Gastrocnemius medialis (tissue), 4 donors: ENCODE measurements at regions of chr11 and their contacts with region 1.

Region 1: GRCh38 chr11:67583247-67584204 is at the start of gene GSTP1:
- DNase-seq: peak; percentile 83 to 90
- ATAC-seq: peak; percentile 90 to 92
- H3K4me3 ChIP-seq: peak within 1 kb of the TSS; percentile 77 to 95 (median 88)
- H3K27ac ChIP-seq: peak within 1 kb of the TSS; percentile 93 to 100 (median 96)
- H3K4me1 ChIP-seq: peaks cover 12 to 16% of the 10 kb centered on the region in 2 donors
- H3K27me3 ChIP-seq: no peaks in the 10 kb centered on the region
- CTCF ChIP-seq: peak; percentile 76 to 94 (median 92)
- POLR2A ChIP-seq: peak; percentile 92
- total RNA-seq, gene GSTP1: 316 to 866 (median 549) TPM

Region 2: DNA sequence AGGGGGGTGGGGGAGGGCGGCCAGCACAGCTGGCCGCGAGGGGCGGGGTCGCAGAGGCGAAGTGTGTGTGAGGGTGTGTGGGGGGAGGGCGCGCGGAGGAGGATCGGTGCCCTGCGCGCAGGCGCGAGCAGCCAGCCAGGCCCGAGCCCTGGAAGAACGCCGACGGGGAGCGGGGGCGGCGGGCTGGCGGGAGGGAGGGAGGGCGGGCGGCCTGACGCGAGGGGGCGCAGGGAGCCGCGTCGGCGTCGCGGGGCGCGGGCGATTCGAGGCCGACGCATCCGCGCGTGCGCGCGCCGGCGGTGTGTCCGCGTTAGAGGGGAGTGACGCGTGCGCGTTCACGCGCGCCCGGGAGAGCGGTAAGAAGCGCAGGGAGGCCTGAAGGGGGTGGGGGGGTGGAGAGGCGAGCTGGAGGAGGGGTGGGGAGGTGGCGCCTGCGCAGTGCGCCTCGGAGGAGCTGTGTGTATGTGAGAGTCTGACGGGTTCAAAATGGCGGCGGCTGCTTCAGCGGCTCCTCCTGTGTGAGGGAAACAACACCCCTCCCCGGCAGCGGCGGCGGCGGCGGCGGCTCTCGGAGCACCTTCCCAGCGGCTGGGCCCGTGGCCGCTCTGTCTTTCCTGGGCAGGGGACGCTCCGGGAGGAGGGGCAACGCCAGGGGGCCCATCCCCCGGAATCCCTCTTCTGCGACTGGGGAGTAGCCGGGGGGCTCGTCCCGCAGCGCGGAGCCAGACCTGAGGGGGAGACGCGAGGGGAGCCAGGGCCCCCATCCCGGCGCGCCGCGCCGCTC is 464.5 kb before region 1 on chr11 and contains the start of gene KDM2A:
- in situ Hi-C with region 1: no loop called
- intact Hi-C with region 1: loop called (anchors 10 kb)
- DNase-seq: peak; percentile 99
- ATAC-seq: peak; percentile 82 to 85
- H3K4me3 ChIP-seq: peak within 1 kb of the TSS; percentile 82 to 98 (median 94)
- H3K27ac ChIP-seq: peak within 1 kb of the TSS; percentile 98 to 100 (median 99)
- H3K4me1 ChIP-seq: peaks cover 26 to 35% of the 10 kb centered on the region in 2 donors
- H3K27me3 ChIP-seq: no peaks in the 10 kb centered on the region
- CTCF ChIP-seq: peak in 1 of 5 experiments; percentile 27
- POLR2A ChIP-seq: peak; percentile 73 to 84
- total RNA-seq, gene KDM2A: 34.8 to 55.0 (median 44.9) TPM

Region 3: DNA sequence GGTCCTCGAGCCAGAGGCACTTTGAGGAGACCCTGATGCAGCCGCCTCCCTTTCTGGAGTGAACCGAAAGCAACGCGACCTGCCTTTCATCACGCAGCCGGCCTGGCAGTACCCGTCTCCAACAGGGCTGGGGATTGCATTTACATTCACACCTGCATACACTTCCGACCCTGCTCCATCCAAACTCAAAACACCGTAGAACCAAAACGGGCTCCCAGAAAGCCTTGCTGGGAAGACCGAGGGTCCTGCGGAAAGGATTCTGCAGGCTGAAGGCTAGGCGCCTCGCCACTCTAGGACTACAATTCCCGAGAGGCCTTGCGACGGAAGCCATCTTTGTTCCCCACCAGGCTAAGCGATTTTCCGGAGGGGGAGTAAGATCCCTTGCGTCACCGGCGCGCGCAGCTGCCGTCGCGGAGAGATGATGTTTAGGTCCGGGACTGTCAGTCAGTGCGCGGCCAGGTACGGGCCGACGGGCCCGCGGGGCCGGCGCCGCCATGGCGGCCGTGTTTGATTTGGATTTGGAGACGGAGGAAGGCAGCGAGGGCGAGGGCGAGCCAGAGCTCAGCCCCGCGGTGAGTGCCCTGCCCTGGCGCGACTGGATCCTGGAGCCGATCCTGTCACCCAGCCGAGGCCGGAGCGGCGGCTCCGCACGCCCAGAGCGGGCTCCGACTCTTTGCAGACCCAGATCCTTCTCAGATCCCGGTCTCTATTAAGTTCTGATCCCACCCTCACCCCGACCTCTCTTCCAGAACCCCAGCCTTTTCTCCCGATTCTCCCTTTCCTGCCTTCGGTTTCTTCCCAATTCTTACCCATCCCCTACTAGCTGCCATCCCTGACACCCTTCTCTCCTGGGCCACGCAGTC is 155.2 kb before region 1 on chr11 and contains the start of gene RPS6KB2:
- in situ Hi-C with region 1: no loop called
- intact Hi-C with region 1: loop called (anchors 10 kb)
- DNase-seq: peak; percentile 96 to 99
- ATAC-seq: peak; percentile 96 to 99
- H3K4me3 ChIP-seq: peak within 1 kb of the TSS; percentile 92 to 100 (median 95)
- H3K27ac ChIP-seq: peak within 1 kb of the TSS; percentile 94 to 98 (median 96)
- H3K4me1 ChIP-seq: peaks cover 16 to 32% of the 10 kb centered on the region in 2 donors
- H3K27me3 ChIP-seq: no peaks in the 10 kb centered on the region
- CTCF ChIP-seq: no peak
- POLR2A ChIP-seq: peak; percentile 95 to 98
- total RNA-seq, gene RPS6KB2: 38.0 to 74.1 (median 39.4) TPM

Region 4: GRCh38 chr11:67572747-67573419 is 10.6 kb before region 1 on chr11:
- in situ Hi-C with region 1: no loop called
- intact Hi-C with region 1: loop called (anchors 1 kb)
- DNase-seq: peak; percentile 37 to 78
- ATAC-seq: peak; percentile 52 to 80
- H3K4me3 ChIP-seq: no peak overlapping the region
- H3K27ac ChIP-seq: peak overlapping the region in 2 of 4 donors; percentile 39 to 41
- H3K4me1 ChIP-seq: no peaks in the 10 kb centered on the region
- H3K27me3 ChIP-seq: no peaks in the 10 kb centered on the region
- CTCF ChIP-seq: peak; percentile 71 to 88 (median 76)
- POLR2A ChIP-seq: no peak

Region 5: DNA sequence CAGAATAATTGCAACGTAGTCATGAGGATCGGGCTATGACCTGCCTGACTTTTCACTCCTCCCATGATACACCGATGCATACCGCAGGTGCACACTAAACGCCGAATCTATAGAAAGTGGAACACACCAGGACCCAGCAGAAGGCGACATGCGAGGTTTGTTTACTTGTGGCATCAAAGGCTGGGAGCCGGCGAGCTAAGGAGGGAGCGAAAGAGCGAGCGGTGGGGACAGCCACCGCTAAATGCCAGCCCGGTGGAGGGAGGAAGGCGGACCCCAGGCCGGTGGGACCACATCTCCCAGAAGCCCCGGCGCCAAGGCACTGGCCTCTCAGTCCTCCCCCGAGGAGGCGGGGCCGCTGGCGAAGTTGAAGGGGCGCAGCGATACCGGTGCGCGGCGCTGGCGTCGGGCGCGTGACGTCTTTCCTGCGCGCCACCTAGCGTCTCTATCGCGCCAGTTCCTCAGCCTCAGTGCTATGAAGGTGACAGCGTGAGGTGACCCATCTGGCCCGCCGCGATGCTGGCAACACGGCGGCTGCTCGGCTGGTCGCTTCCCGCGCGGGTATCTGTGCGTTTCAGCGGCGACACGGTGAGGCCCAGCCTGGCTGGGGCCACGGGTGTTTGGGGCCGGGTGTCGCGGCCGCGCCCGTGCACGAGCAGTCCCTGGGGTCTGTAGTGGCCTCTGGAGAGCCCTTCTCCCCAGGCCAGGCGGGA is 23.1 kb after region 1 on chr11 and contains the start of gene NDUFV1:
- in situ Hi-C with region 1: no loop called
- intact Hi-C with region 1: loop called (anchors 1 kb)
- DNase-seq: peak; percentile 93 to 96
- ATAC-seq: peak; percentile 95 to 96
- H3K4me3 ChIP-seq: peak within 1 kb of the TSS; percentile 81 to 100 (median 92)
- H3K27ac ChIP-seq: peak within 1 kb of the TSS; percentile 89 to 97 (median 91)
- H3K4me1 ChIP-seq: peaks cover 16 to 23% of the 10 kb centered on the region in 2 donors
- H3K27me3 ChIP-seq: no peaks in the 10 kb centered on the region
- CTCF ChIP-seq: peak; percentile 41 to 88 (median 79)
- POLR2A ChIP-seq: peak; percentile 64 to 73
- total RNA-seq, gene NDUFV1: 306 to 608 (median 365) TPM

Region 6: DNA sequence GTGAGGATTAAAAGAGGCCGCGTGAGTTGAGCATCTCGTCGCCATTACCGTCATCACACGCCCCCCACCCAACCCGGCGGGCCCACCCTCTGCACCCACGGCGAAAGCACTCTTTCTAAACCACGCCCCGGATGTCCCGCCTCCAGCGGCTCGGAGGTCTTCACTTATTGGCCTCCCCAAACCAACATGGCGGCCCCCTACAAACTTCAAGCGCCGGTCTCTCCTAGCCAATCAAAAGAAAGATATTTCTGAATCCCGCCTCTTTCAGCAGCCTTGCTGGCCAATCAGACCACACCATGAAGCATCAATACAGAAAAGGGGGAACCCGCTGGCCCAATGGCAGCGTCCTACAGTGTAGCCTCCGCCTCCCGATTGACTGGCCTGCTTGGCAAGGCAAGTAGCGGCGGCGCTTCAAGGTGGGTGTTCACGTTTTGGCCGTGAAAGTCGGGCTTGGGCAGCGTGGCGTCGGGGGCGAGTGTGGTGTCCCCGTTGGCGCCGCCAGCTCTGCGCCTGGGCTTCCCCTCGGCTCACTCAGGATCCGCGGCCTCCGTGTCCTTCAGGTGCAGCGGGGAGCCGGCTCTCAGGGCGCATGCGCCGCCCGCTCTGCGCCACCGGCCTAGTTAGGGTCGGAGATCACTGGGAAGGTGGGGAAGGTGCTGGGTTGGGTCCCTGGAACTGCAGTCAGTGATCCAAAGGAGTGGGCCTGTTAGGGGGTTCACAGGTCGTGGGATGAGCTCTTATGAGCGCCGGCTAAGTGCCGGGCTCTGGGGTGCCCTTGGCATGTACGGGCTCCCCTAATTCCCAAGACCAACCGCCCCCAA is 447.0 kb after region 1 on chr11 and contains the start of gene NDUFS8:
- in situ Hi-C with region 1: no loop called
- intact Hi-C with region 1: loop called (anchors 10 kb)
- DNase-seq: peak; percentile 96 to 98
- ATAC-seq: peak; percentile 96 to 99
- H3K4me3 ChIP-seq: peak within 1 kb of the TSS; percentile 71 to 93 (median 86)
- H3K27ac ChIP-seq: peak within 1 kb of the TSS; percentile 90 to 97 (median 92)
- H3K4me1 ChIP-seq: peaks cover 27 to 38% of the 10 kb centered on the region in 2 donors
- H3K27me3 ChIP-seq: no peaks in the 10 kb centered on the region
- CTCF ChIP-seq: no peak
- POLR2A ChIP-seq: peak; percentile 49 to 68
- total RNA-seq, gene NDUFS8: 242 to 432 (median 307) TPM

Region 7: DNA sequence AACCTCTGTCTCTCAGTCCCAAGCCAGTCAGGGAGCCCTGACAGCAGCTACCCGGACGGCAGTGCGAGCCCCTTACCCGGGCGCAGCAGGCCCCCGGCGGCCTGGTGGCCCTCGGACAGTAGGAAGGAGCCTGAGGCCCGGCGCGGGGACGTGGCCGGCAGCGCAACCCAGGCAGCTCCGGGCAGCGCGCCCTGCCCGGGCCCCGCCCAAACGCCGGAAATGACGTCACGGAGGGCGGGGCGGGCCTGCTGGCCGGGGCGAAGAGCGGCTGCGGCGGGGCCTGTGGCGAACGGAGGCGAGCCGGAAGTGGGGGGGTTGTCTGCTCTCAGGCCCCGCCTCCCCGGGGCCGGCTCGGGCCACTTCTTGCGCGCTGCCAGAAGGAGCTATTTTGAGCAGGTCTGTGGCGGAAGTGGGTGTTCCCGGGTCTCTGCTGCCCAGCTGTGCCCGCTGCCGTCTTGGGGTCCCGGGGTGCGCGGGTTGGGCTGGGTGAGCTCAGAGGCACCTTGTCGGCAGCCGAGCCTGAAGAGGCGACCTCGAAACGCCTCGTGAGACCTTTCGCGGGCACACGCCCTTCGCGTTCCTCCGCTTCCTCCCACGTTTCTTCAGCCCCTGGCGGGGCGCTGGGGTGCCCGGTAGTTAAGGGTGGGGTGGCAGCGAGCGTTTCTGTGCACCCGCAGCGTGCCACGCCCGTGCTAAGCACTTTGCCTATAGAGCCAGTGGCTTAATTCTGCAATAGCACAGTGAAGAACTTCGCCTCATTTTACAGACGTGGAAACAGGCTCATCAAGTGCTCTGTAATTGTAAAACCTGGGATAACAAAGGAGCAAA is 688.5 kb after region 1 on chr11 and contains the start of gene C11orf24:
- in situ Hi-C with region 1: no loop called
- intact Hi-C with region 1: no loop called
- DNase-seq: peak; percentile 92 to 94
- ATAC-seq: peak; percentile 92 to 94
- H3K4me3 ChIP-seq: peak within 1 kb of the TSS; percentile 66 to 89 (median 75)
- H3K27ac ChIP-seq: peak within 1 kb of the TSS; percentile 88 to 97 (median 92)
- H3K4me1 ChIP-seq: peaks cover 21 to 31% of the 10 kb centered on the region in 2 donors
- H3K27me3 ChIP-seq: no peaks in the 10 kb centered on the region
- CTCF ChIP-seq: peak in 1 of 5 experiments; percentile 7
- POLR2A ChIP-seq: peak; percentile 77 to 80
- total RNA-seq, gene C11orf24: 8.1 to 19.3 (median 10.6) TPM